CD4-positive, alpha-beta memory T cell (primary cell): ENCODE measurements at regions of chr7 and their contacts with region 1.

Region 1: GRCh38 chr7:70229242-70229641 is 631.0 kb downstream of the AUTS2 start:
- DNase-seq: no peak
- H3K4me3 ChIP-seq: no peak overlapping the region
- H3K4me3 Mint-ChIP-seq: no peak overlapping the region
- H3K27ac ChIP-seq: no peak overlapping the region
- H3K27ac Mint-ChIP-seq: no peak overlapping the region
- H3K4me1 ChIP-seq: no peaks in the 10 kb centered on the region
- H3K4me1 Mint-ChIP-seq: no peaks in the 10 kb centered on the region
- H3K27me3 ChIP-seq: no peaks in the 10 kb centered on the region
- H3K27me3 Mint-ChIP-seq: no peaks in the 10 kb centered on the region

Region 2: DNA sequence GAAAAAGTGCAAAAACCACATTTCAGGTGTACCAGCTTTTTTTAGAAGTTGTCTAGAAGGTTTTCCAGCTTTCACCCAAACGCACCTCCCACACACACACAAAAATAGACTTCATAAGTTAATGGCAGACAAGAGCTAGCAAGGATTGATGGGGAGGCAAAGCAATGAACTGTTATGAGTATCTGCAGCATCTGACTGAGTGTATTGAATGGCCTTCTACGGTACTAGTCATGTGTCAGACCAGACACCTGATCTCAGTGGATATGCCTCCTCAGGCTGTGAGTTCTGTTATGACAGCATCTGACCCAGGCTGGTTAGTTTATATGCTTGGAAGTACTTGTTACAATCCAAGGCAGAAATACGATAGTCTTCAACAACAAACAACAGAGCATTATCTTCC is 1037.1 kb before region 1 on chr7:
- CTCF ChIA-PET with region 1: no interaction called
- POLR2A ChIA-PET with region 1: no interaction called
- intact Hi-C with region 1: no loop called
- DNase-seq: no peak
- H3K4me3 ChIP-seq: no peak overlapping the region
- H3K4me3 Mint-ChIP-seq: no peak overlapping the region
- H3K27ac ChIP-seq: no peak overlapping the region
- H3K27ac Mint-ChIP-seq: no peak overlapping the region
- H3K4me1 ChIP-seq: no peaks in the 10 kb centered on the region
- H3K4me1 Mint-ChIP-seq: no peaks in the 10 kb centered on the region
- H3K27me3 ChIP-seq: no peaks in the 10 kb centered on the region
- H3K27me3 Mint-ChIP-seq: no peaks in the 10 kb centered on the region

Region 3: GRCh38 chr7:70288781-70289456 is 59.7 kb after region 1 on chr7:
- CTCF ChIA-PET with region 1: no interaction called
- POLR2A ChIA-PET with region 1: no interaction called
- intact Hi-C with region 1: loop called (anchors 10 kb)
- DNase-seq: no peak
- H3K4me3 ChIP-seq: no peak overlapping the region
- H3K4me3 Mint-ChIP-seq: no peak overlapping the region
- H3K27ac ChIP-seq: no peak overlapping the region
- H3K27ac Mint-ChIP-seq: no peak overlapping the region
- H3K4me1 ChIP-seq: no peaks in the 10 kb centered on the region
- H3K4me1 Mint-ChIP-seq: peaks cover 0 to 4% (median 3%) of the 10 kb centered on the region in 4 donors
- H3K27me3 ChIP-seq: no peaks in the 10 kb centered on the region
- H3K27me3 Mint-ChIP-seq: no peaks in the 10 kb centered on the region